PC-3 (cell line): ENCODE measurements at regions of chr3 and their contacts with region 1.

Region 1: DNA sequence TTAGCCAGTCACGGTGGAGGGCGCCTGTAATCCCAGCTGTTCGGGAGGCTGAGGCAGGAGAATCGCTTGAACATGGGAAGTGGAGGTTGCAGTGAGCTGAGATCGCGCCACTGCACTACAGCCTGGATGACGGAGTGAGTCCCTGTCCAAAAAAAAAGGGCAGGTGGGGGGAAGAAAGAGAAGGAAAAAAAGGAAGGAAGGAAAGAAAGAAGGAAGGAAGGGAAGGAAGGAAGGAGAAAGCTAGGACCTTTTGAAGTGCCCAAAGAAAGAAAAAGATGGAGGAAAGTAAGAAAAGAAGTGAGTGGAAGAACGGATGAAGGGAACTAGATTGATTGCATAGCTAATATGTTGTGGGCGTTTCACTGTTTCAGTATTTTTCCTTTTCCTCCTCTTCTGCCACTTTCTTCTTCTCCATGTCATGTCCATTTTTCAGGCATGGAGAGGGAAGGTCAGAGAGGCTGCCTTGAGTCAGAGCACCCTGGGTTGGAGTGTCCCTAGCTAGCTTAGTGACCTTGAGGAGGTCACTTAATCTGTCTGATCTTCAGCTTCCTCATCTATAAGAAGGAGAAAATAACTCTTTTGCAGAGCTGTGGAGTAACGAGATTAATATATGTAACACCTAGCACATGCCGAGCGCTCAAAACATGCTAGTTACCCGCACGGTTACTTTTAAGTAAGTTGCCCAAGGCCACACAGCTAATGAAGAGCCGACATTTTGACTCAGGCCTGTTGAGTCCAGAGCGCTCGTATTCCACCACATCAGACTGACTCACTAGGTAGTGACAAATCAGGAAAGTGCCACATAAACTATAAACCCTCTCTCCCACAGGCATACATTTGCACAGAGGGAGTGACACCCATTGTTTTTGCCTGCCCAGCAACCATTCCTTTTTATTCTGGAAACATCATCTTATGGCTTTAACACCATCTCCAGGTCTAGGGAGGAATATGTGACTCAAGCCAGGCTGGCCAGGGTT is 42.2 kb downstream of the BHLHE40 start:
- DNase-seq: peak; percentile 96
- ATAC-seq: peak; percentile 73
- H3K4me3 ChIP-seq: peak overlapping the region; percentile 11; the same call in 1 of the 2 replicates
- H3K27ac ChIP-seq: peak overlapping the region; percentile 96
- H3K4me1 ChIP-seq: peaks cover 77% of the 10 kb centered on the region
- H3K27me3 ChIP-seq: no peaks in the 10 kb centered on the region
- CTCF ChIP-seq: peak; percentile 47

Region 2: GRCh38 chr3:4986782-4987537 is 34.4 kb before region 1 on chr3:
- CTCF ChIA-PET with region 1: interaction called, 11 read pairs
- POLR2A ChIA-PET with region 1: interaction called, 79 read pairs
- intact Hi-C with region 1: loop called (anchors 1 kb)
- DNase-seq: peak; percentile 98
- ATAC-seq: peak; percentile 69
- H3K4me3 ChIP-seq: peak overlapping the region; percentile 35; the same call in 1 of the 2 replicates
- H3K27ac ChIP-seq: peak overlapping the region; percentile 90
- H3K4me1 ChIP-seq: peaks cover 63% of the 10 kb centered on the region
- H3K27me3 ChIP-seq: no peaks in the 10 kb centered on the region
- CTCF ChIP-seq: 0 out of 2 replicates have a peak, but pooled peaks have one; percentile 25

Region 3: GRCh38 chr3:4994823-4995499 is 26.4 kb before region 1 on chr3:
- CTCF ChIA-PET with region 1: interaction called, 3 read pairs
- POLR2A ChIA-PET with region 1: interaction called, 5 read pairs
- intact Hi-C with region 1: loop called (anchors 1 kb)
- DNase-seq: peak; percentile 92
- ATAC-seq: peak; percentile 81
- H3K4me3 ChIP-seq: no peak overlapping the region
- H3K27ac ChIP-seq: peak overlapping the region; percentile 97
- H3K4me1 ChIP-seq: peaks cover 53% of the 10 kb centered on the region
- H3K27me3 ChIP-seq: no peaks in the 10 kb centered on the region
- CTCF ChIP-seq: no peak

Region 4: GRCh38 chr3:5250467-5251195 is 229.2 kb after region 1 on chr3:
- CTCF ChIA-PET with region 1: no interaction called
- POLR2A ChIA-PET with region 1: no interaction called
- intact Hi-C with region 1: no loop called
- DNase-seq: peak; percentile 26
- ATAC-seq: peak; percentile 88
- H3K4me3 ChIP-seq: peak overlapping the region; percentile 67
- H3K27ac ChIP-seq: no peak overlapping the region
- H3K4me1 ChIP-seq: peaks cover 8% of the 10 kb centered on the region; the same call in 1 of the 2 replicates
- H3K27me3 ChIP-seq: peaks cover 20% of the 10 kb centered on the region; the same call in 1 of the 2 replicates
- CTCF ChIP-seq: no peak